Psoas muscle (tissue), 8 donors: ENCODE measurements at regions of chr17 and their contacts with region 1.

Region 1: GRCh38 chr17:4658478-4659305 is 17.2 kb upstream of the ALOX15 start:
- DNase-seq: no peak
- ATAC-seq: no peak
- H3K4me3 ChIP-seq: no peak overlapping the region
- H3K27ac ChIP-seq: no peak overlapping the region
- H3K4me1 ChIP-seq: no peaks in the 10 kb centered on the region
- H3K27me3 ChIP-seq: peaks cover 0 to 29% (median 4%) of the 10 kb centered on the region in 3 donors
- CTCF ChIP-seq: no peak

Region 2: DNA sequence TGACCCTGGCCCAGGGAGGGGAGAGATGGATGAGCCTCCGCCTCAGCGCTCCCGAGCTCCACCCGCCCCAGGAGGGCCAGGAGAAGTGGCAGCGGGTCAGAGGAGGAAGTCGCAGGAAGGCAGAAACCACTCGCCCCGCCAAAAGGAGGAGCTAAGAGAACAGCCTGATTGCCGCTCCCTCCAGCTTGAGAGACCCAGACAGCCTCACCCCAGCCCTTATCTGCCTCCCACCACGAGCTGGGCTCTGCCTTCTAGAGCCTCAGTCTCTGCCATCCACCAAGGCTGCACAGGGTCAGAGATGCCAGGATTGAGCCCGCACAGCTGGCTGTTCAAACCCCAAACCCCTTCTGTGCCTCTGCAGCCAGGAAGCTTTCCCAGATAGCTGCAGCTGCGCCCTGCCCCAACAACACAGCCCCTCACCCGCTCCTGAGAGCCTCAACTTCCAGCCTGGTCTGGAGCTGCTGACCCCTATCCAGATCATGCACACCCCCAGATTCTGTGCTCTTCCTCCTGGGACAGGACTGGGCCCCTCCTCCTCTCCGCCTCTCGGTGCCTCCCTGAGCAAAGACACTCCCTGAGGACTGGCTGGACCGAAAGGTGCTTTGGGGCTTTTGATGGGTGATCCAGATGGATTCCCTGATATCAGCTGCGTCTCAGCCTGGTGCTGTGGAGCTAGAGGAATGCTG is 693.4 kb before region 1 on chr17:
- intact Hi-C with region 1: loop called in 1 of 2 experiments (anchors 10 kb)
- DNase-seq: no peak
- ATAC-seq: peak in 3 of 4 donors; percentile 5 to 51 (median 25)
- H3K4me3 ChIP-seq: peak overlapping the region; percentile 45
- H3K27ac ChIP-seq: no peak overlapping the region
- H3K4me1 ChIP-seq: no peaks in the 10 kb centered on the region
- H3K27me3 ChIP-seq: peaks cover 0 to 47% (median 16%) of the 10 kb centered on the region in 3 donors
- CTCF ChIP-seq: no peak

Region 3: GRCh38 chr17:4881761-4882555 is 223.3 kb after region 1 on chr17:
- intact Hi-C with region 1: no loop called
- DNase-seq: peak; percentile 43 to 70
- ATAC-seq: peak; percentile 58 to 83 (median 70)
- H3K4me3 ChIP-seq: no peak overlapping the region
- H3K27ac ChIP-seq: no peak overlapping the region
- H3K4me1 ChIP-seq: no peaks in the 10 kb centered on the region
- H3K27me3 ChIP-seq: no peaks in the 10 kb centered on the region
- CTCF ChIP-seq: peak; percentile 67